Breast epithelium (tissue), 4 donors: ENCODE measurements at regions of chr1 and their contacts with region 1.

Region 1: GRCh38 chr1:101833312-101833711 is 163.4 kb downstream of the OLFM3 start:
- DNase-seq: no peak
- H3K4me3 ChIP-seq: no peak overlapping the region
- H3K27ac ChIP-seq: no peak overlapping the region
- H3K4me1 ChIP-seq: no peaks in the 10 kb centered on the region
- H3K27me3 ChIP-seq: no peaks in the 10 kb centered on the region
- CTCF ChIP-seq: no peak
- POLR2A ChIP-seq: no peak

Region 2: GRCh38 chr1:101309334-101310311 is 523.7 kb before region 1 on chr1:
- intact Hi-C with region 1: loop called (anchors 5 kb)
- DNase-seq: peak in 1 of 2 donors; percentile 54
- H3K4me3 ChIP-seq: peak overlapping the region; percentile 33 to 57 (median 49)
- H3K27ac ChIP-seq: no peak overlapping the region
- H3K4me1 ChIP-seq: no peaks in the 10 kb centered on the region
- H3K27me3 ChIP-seq: no peaks in the 10 kb centered on the region
- CTCF ChIP-seq: peak in 2 of 3 donors; percentile 60 to 69
- POLR2A ChIP-seq: no peak